ENCODE measurements at regions of chr9 and their contacts with region 1.

Region 1: DNA sequence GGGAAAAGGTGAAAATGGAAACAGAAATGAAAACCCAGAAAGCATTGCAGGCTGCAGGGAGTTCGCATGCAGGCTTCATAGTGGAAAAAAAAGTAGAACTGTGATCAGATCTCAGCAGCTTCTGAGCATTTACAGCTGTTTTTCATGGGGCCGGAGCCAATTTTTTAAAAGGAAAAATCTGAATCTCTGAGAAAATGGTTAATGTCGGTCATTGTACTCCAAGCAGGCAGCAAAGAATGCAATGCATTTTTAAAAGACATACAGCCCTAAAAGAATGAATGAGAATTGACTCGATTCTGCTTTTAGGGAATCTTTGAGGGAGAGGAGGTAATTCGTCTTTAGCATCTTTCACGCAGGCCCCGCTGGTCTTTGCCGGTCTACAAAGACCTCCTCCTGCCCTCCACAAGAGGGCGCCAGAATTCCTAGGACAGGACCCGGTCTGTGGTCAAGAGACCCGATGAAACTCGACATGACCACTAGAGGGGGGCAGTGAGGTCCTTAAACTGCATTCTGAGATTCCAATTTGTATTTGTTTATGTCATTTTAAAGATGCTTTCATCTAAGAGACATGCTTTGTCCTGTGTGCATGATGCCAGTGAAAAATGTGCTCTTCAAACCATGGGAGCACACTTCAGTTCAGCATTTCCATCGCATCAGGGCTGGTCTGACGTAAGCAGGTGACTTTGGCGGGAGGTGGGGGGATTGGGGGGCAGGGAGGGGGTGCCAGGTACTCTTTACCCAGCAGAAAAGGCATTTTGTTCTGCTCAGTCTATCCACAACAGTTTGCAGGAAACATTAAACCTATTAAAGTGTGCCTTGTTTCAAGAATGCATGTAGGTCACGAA is 43.7 kb upstream of the TMEM252 start:
- DNase-seq: peak; percentile 69 to 82
- H3K4me3 ChIP-seq: no peak overlapping the region
- H3K27ac ChIP-seq: no peak overlapping the region
- H3K4me1 ChIP-seq: peaks cover 0 to 3% (median 0%) of the 10 kb centered on the region in 4 experiments; a peak in 2 of 7 replicates
- H3K27me3 ChIP-seq: no peaks in the 10 kb centered on the region
- CTCF ChIP-seq: peak; percentile 96 to 100 (median 100)
- EP300 ChIP-seq: no peak
- POLR2A ChIP-seq: no peak
- RAD21 ChIP-seq: peak; percentile 95 to 99

Region 2: DNA sequence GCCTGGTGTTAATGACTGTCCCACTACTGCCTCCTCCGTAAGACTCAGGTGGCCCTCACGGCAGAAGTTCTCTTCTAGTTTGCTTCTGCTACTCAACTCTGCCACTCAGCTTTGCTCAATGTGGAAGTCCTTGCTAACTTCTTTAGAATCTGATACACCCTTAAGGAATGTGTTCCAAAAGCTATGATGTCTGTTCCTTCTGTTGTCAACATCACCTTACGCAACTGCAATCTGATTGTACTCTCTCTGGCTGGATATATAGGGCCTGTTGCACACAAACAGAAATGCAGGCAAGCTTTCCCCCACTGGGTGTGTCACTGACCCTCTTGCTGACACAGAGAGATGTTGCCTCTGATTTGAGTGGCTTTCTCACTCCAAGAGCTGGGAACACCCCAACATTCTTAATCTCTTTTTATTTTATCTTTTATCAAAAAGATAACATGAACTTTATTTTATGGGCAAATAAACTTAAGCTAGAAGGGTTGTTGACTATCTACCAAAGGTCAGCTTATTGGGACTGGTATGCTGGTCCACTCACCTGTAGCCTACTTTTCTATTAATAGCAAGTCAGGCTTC is 69.0 kb before region 1 on chr9:
- CTCF ChIA-PET with region 1: no interaction called
- POLR2A ChIA-PET with region 1: no interaction called
- DNase-seq: no peak
- H3K4me3 ChIP-seq: no peak overlapping the region
- H3K27ac ChIP-seq: no peak overlapping the region
- H3K4me1 ChIP-seq: 0 out of 7 replicates have a peak, but pooled peaks cover 0 to 3% (median 0%) of the 10 kb centered on the region in 4 experiments
- H3K27me3 ChIP-seq: peaks cover 35 to 61% (median 54%) of the 10 kb centered on the region in 4 experiments
- CTCF ChIP-seq: no peak
- EP300 ChIP-seq: no peak
- POLR2A ChIP-seq: no peak
- RAD21 ChIP-seq: no peak

Region 3: GRCh38 chr9:68560071-68560844 is 24.2 kb before region 1 on chr9:
- CTCF ChIA-PET with region 1: interaction called, 10 read pairs
- POLR2A ChIA-PET with region 1: no interaction called
- DNase-seq: peak; percentile 54 to 91
- H3K4me3 ChIP-seq: no peak overlapping the region
- H3K27ac ChIP-seq: no peak overlapping the region
- H3K4me1 ChIP-seq: peaks cover 2 to 19% (median 8%) of the 10 kb centered on the region in 4 experiments; a peak in 6 of 7 replicates
- H3K27me3 ChIP-seq: peaks cover 0 to 9% (median 0%) of the 10 kb centered on the region in 4 experiments; a peak in 2 of 7 replicates
- CTCF ChIP-seq: peak; percentile 79 to 89 (median 89)
- EP300 ChIP-seq: no peak
- POLR2A ChIP-seq: no peak
- RAD21 ChIP-seq: peak; percentile 50 to 67; a peak in 3 of 4 replicates

Region 4: DNA sequence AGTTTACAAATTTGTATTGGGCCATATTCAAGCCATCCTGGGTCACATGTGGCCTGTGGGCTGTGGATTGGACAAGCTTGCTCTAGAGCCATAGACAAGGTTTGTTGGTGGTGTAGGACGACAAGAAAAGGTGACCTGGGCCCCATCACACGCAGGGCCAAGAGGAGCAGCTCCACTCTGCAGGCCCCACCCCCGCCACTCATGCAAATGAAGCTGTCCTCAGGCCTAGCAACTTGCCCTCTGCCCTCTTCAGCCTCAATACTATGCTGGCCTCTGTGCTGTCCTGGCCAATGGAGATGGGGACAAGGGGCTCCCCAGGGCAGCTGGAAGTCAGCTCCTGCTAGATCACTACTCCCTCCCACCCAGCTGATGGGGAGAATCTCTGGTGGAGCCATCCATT is 11.5 kb after region 1 on chr9:
- CTCF ChIA-PET with region 1: interaction called, 32 read pairs
- POLR2A ChIA-PET with region 1: interaction called, 3 read pairs
- DNase-seq: no peak
- H3K4me3 ChIP-seq: no peak overlapping the region
- H3K27ac ChIP-seq: no peak overlapping the region
- H3K4me1 ChIP-seq: peaks cover 0 to 7% (median 2%) of the 10 kb centered on the region in 4 experiments; a peak in 4 of 7 replicates
- H3K27me3 ChIP-seq: no peaks in the 10 kb centered on the region
- CTCF ChIP-seq: no peak
- EP300 ChIP-seq: no peak
- POLR2A ChIP-seq: no peak
- RAD21 ChIP-seq: no peak

Region 5: GRCh38 chr9:68685770-68686169 is 101.4 kb after region 1 on chr9:
- CTCF ChIA-PET with region 1: interaction called, 10 read pairs
- POLR2A ChIA-PET with region 1: no interaction called
- DNase-seq: peak in 1 of 2 experiments; percentile 57
- H3K4me3 ChIP-seq: no peak overlapping the region
- H3K27ac ChIP-seq: no peak overlapping the region
- H3K4me1 ChIP-seq: 0 out of 7 replicates have a peak, but pooled peaks cover 0 to 2% (median 0%) of the 10 kb centered on the region in 4 experiments
- H3K27me3 ChIP-seq: no peaks in the 10 kb centered on the region
- CTCF ChIP-seq: peak; percentile 45 to 74 (median 55)
- EP300 ChIP-seq: no peak
- POLR2A ChIP-seq: no peak
- RAD21 ChIP-seq: peak; percentile 48 to 66

Region 6: DNA sequence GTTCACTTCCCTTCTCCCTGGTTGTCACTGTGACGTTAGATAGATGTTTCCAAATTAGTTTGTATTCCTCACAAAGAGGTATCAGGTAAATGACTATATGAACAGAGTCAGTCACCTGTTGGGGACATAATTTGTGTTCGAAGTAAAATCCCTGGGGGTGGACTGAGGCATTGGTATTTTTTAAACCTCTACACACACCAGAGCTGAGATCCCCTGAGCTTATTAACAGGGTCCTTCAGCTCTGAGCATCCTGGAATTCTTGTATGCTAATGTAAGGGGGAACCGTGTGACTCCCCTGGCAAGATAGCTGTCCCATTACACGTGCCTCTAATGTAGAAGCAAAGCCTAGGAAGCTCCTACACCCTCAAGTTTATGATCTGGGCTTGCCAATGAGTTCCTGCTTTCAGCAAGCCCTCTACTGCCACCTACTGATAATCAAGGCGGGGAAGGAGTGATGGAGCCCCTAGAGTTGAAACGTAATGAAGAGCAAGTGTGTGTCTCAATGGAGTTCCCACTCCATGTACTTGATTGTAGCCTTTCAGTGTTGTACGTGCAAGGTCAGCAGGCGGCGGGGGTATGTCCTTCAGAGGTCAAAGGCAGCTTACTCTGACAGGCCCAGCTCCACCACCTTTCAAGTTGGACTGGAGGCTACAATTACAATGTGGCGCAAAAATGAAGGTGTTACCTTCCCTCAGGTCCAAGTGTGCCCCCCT is 415.1 kb after region 1 on chr9:
- CTCF ChIA-PET with region 1: interaction called, 18 read pairs
- POLR2A ChIA-PET with region 1: no interaction called
- DNase-seq: peak; percentile 60 to 70
- H3K4me3 ChIP-seq: no peak overlapping the region
- H3K27ac ChIP-seq: no peak overlapping the region
- H3K4me1 ChIP-seq: peaks cover 0 to 7% (median 2%) of the 10 kb centered on the region in 4 experiments; a peak in 3 of 7 replicates
- H3K27me3 ChIP-seq: no peaks in the 10 kb centered on the region
- CTCF ChIP-seq: peak; percentile 42 to 99 (median 97)
- EP300 ChIP-seq: no peak
- POLR2A ChIP-seq: no peak
- RAD21 ChIP-seq: peak; percentile 99

Measured in H1 (cell line).